ENCODE measurements at regions of chr10 and their contacts with region 1.

Region 1: DNA sequence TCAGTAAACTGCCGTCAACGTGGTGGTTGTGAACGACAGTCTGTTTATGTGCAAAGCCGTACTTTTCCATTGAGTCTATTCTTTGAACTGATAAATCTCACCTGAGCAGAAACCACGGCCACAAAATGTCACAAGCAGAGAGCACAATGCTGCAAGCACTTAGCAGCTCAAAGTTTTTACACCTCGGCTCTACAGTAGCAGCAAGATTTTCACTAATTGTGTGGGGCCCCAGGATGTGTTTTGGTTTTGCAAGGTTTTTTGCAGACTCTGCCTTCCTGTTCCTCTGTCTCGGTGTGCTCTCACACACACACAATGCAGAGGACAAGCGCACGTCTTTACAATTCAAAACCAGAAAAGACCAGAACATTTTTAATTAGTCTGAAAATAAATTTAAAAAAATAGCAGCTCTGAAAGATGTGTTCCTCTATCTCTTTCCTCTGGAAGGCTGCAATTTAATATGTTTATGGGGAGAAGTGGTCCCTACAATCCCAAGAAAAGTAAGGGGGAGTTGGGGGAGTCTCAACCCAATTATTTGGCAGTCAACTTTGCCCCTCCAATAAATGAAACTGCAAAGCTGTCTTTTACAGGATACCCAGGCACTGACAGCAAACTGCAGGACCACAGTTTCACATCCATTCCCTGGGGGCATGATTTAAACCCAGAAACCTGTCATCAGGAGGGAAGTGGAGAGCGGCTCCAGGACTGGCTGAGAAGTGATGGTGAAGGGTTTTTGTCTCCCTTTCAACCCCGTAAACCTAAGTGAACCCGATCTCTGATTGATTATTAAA is 73.8 kb upstream of the SFMBT2 start:
- DNase-seq: peak; percentile 91
- ATAC-seq: peak; percentile 92
- H3K4me3 Mint-ChIP-seq: peak overlapping the region; percentile 65
- H3K27ac Mint-ChIP-seq: peak overlapping the region; percentile 97
- H3K4me1 Mint-ChIP-seq: peaks cover 93% of the 10 kb centered on the region
- H3K27me3 Mint-ChIP-seq: no peaks in the 10 kb centered on the region

Region 2: GRCh38 chr10:7258948-7259523 is 225.6 kb before region 1 on chr10:
- CTCF ChIA-PET with region 1: no interaction called
- POLR2A ChIA-PET with region 1: no interaction called
- DNase-seq: peak; percentile 92
- ATAC-seq: peak; percentile 74
- H3K4me3 Mint-ChIP-seq: peak overlapping the region; percentile 59
- H3K27ac Mint-ChIP-seq: peak overlapping the region; percentile 80
- H3K4me1 Mint-ChIP-seq: peaks cover 73% of the 10 kb centered on the region
- H3K27me3 Mint-ChIP-seq: no peaks in the 10 kb centered on the region

Region 3: GRCh38 chr10:7507887-7508726 is 23.5 kb after region 1 on chr10:
- CTCF ChIA-PET with region 1: interaction called, 3 read pairs
- POLR2A ChIA-PET with region 1: interaction called, 12 read pairs
- DNase-seq: peak; percentile 84
- ATAC-seq: peak; percentile 73
- H3K4me3 Mint-ChIP-seq: peak overlapping the region; percentile 44
- H3K27ac Mint-ChIP-seq: peak overlapping the region; percentile 95
- H3K4me1 Mint-ChIP-seq: peaks cover 77% of the 10 kb centered on the region
- H3K27me3 Mint-ChIP-seq: no peaks in the 10 kb centered on the region

Region 4: GRCh38 chr10:7696545-7696944 is 211.9 kb after region 1 on chr10:
- CTCF ChIA-PET with region 1: no interaction called
- POLR2A ChIA-PET with region 1: no interaction called
- DNase-seq: no peak
- ATAC-seq: no peak
- H3K4me3 Mint-ChIP-seq: no peak overlapping the region
- H3K27ac Mint-ChIP-seq: no peak overlapping the region
- H3K4me1 Mint-ChIP-seq: no peaks in the 10 kb centered on the region
- H3K27me3 Mint-ChIP-seq: peaks cover 12% of the 10 kb centered on the region

Measured in activated CD8-positive, alpha-beta T cell treated with anti-CD3 and anti-CD28 coated beads, Interleukin-2, amount 10 ng/mL, durations not matched to agents 7 days and 5 days (primary cell).